Activated naive CD4-positive, alpha-beta T cell treated with anti-CD3 and anti-CD28 coated beads for 36 hours (primary cell): ENCODE measurements at regions of chr6 and their contacts with region 1.

Region 1: GRCh38 chr6:99588618-99589289 is 17.9 kb upstream of the PRDM13 start:
- DNase-seq: peak; percentile 83
- H3K4me3 Mint-ChIP-seq: peak overlapping the region; percentile 76
- H3K27ac Mint-ChIP-seq: no peak overlapping the region
- H3K4me1 Mint-ChIP-seq: peaks cover 18% of the 10 kb centered on the region
- H3K27me3 Mint-ChIP-seq: peaks cover 64% of the 10 kb centered on the region

Region 2: GRCh38 chr6:99602520-99603420 is 14.0 kb after region 1 on chr6:
- CTCF ChIA-PET with region 1: interaction called, 7 read pairs
- intact Hi-C with region 1: loop called (anchors 1 kb)
- DNase-seq: no peak
- H3K4me3 Mint-ChIP-seq: peak overlapping the region; percentile 40
- H3K27ac Mint-ChIP-seq: no peak overlapping the region
- H3K4me1 Mint-ChIP-seq: peaks cover 27% of the 10 kb centered on the region
- H3K27me3 Mint-ChIP-seq: peaks cover 76% of the 10 kb centered on the region

Region 3: DNA sequence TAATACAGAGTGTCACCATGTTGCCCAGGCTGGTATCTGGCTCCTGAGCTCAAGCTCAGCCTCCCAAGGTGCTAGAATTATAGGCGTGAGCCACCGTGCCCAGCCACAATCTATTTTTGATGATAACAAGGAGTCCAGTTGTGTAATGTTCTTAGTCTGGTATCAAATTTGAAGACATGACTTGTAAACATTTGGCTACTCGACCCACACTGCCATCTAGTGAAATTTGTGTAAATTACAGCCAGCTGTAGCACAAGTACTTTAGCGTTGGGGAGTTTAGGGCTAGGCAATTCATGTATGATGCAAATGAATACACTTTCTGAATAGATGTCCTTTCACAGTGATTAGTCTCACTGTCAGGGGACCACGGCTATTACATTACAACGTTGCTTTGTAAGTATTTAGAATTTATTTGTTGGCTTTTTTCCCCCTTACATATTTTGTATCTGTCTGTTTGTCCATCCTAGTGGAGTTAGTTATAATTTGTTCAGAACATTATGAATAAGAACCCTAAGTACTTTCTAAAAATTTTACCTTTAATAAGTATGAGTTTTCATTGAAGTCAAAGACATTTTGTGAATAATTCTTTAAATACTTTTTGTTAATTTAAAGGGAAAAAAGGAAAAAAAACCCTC is 157.6 kb after region 1 on chr6:
- CTCF ChIA-PET with region 1: interaction called, 43 read pairs
- intact Hi-C with region 1: loop called (anchors 1 kb)
- DNase-seq: peak; percentile 69
- H3K4me3 Mint-ChIP-seq: no peak overlapping the region
- H3K27ac Mint-ChIP-seq: no peak overlapping the region
- H3K4me1 Mint-ChIP-seq: no peaks in the 10 kb centered on the region
- H3K27me3 Mint-ChIP-seq: peaks cover 28% of the 10 kb centered on the region

Region 4: DNA sequence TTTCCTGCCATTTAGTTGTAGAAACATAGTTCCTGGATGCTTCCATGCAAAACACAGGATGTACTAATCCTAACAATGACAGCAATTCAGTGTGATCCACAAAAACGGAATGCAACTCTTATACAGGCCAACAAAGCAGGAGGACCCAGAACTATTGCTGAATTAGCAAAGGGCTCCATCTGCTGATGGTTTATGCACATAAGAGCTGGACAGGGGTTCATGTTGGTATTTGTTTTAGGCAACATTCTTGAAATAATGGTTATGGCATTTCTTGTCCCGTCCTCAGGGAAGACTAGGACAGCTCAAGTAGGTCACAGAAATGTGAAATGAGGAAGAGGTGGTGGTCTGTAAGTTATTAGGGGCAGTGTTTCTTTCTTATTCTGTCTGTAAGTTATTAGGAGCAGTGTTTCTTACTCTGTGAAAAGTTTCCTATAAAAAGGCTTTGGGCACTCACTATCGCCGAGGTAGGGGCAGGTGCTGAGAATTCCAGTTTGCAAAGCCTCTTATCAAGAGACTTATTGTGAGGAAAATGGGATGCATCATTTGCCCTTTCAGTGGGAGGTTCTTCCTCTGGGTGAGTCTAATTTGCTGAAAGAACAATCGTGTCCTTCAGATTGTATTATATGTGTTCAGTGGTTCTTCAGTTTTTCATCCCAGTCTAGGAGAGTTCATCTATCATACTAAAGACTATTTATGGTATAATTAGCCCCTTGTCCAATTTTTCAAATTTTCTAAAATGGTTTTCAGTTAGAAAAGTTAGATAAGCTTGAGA is 234.2 kb after region 1 on chr6:
- CTCF ChIA-PET with region 1: interaction called, 3 read pairs
- intact Hi-C with region 1: loop called (anchors 2 kb)
- DNase-seq: no peak
- H3K4me3 Mint-ChIP-seq: no peak overlapping the region
- H3K27ac Mint-ChIP-seq: no peak overlapping the region
- H3K4me1 Mint-ChIP-seq: peaks cover 2% of the 10 kb centered on the region
- H3K27me3 Mint-ChIP-seq: peaks cover 28% of the 10 kb centered on the region